ENCODE measurements at regions of chr1 and their contacts with region 1.

Region 1: GRCh38 chr1:84603941-84604830 is 29.9 kb upstream of the CTBS start:
- DNase-seq: peak; percentile 97
- ATAC-seq: peak; percentile 77
- H3K4me3 ChIP-seq: peak overlapping the region; percentile 63
- H3K27ac ChIP-seq: peak overlapping the region; percentile 92
- H3K4me1 ChIP-seq: peaks cover 27% of the 10 kb centered on the region
- H3K27me3 ChIP-seq: no peaks in the 10 kb centered on the region
- CTCF ChIP-seq: peak; percentile 88

Region 2: DNA sequence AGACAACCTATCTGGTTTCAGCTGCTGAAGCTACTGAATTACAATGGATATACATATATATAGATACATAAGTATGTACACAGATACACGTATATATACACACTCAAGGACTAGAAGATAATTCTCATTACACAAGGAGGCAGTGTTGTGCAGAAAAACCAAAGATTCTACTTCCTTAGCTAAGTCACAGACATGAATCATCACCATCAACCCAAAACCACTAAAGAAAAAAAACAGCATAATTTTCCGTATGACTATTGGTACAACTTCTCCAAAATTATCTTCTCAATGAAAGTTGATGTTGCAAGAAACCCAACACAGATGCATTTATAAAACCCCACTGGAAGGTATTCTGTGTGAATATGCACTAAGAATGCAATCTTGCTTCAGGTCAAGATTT is 161.9 kb before region 1 on chr1:
- CTCF ChIA-PET with region 1: interaction called, 11 read pairs
- POLR2A ChIA-PET with region 1: no interaction called
- intact Hi-C with region 1: loop called (anchors 1 kb)
- DNase-seq: peak; percentile 93
- ATAC-seq: peak; percentile 93
- H3K4me3 ChIP-seq: no peak overlapping the region
- H3K27ac ChIP-seq: peak overlapping the region; percentile 57
- H3K4me1 ChIP-seq: peaks cover 12% of the 10 kb centered on the region
- H3K27me3 ChIP-seq: no peaks in the 10 kb centered on the region
- CTCF ChIP-seq: peak; percentile 84

Region 3: GRCh38 chr1:84478876-84479868 is 125.0 kb before region 1 on chr1 and contains the start of gene RPF1:
- CTCF ChIA-PET with region 1: no interaction called
- POLR2A ChIA-PET with region 1: interaction called, 3 read pairs
- intact Hi-C with region 1: loop called (anchors 1 kb)
- DNase-seq: peak; percentile 79
- ATAC-seq: peak; percentile 96
- H3K4me3 ChIP-seq: peak within 1 kb of the TSS; percentile 84
- H3K27ac ChIP-seq: peak within 1 kb of the TSS; percentile 52
- H3K4me1 ChIP-seq: peaks cover 30% of the 10 kb centered on the region
- H3K27me3 ChIP-seq: no peaks in the 10 kb centered on the region
- CTCF ChIP-seq: no peak
- total RNA-seq, gene RPF1: 83.0 and 85.8 TPM in 2 replicates

Region 4: GRCh38 chr1:84541679-84542078 is 62.5 kb before region 1 on chr1:
- CTCF ChIA-PET with region 1: no interaction called
- POLR2A ChIA-PET with region 1: no interaction called
- intact Hi-C with region 1: loop called (anchors 2 kb)
- DNase-seq: peak; percentile 14
- ATAC-seq: no peak
- H3K4me3 ChIP-seq: no peak overlapping the region
- H3K27ac ChIP-seq: no peak overlapping the region
- H3K4me1 ChIP-seq: peaks cover 16% of the 10 kb centered on the region
- H3K27me3 ChIP-seq: no peaks in the 10 kb centered on the region
- CTCF ChIP-seq: peak; percentile 65

Region 5: GRCh38 chr1:84573967-84574842 is 30.0 kb before region 1 on chr1 and contains the start of gene CTBS:
- CTCF ChIA-PET with region 1: no interaction called
- POLR2A ChIA-PET with region 1: interaction called, 4 read pairs
- intact Hi-C with region 1: loop called (anchors 1 kb)
- DNase-seq: peak; percentile 80
- ATAC-seq: peak; percentile 88
- H3K4me3 ChIP-seq: peak within 1 kb of the TSS; percentile 94
- H3K27ac ChIP-seq: peak within 1 kb of the TSS; percentile 97
- H3K4me1 ChIP-seq: peaks cover 39% of the 10 kb centered on the region
- H3K27me3 ChIP-seq: no peaks in the 10 kb centered on the region
- CTCF ChIP-seq: no peak
- total RNA-seq, gene CTBS: 3.7 and 5.9 TPM in 2 replicates

Region 6: DNA sequence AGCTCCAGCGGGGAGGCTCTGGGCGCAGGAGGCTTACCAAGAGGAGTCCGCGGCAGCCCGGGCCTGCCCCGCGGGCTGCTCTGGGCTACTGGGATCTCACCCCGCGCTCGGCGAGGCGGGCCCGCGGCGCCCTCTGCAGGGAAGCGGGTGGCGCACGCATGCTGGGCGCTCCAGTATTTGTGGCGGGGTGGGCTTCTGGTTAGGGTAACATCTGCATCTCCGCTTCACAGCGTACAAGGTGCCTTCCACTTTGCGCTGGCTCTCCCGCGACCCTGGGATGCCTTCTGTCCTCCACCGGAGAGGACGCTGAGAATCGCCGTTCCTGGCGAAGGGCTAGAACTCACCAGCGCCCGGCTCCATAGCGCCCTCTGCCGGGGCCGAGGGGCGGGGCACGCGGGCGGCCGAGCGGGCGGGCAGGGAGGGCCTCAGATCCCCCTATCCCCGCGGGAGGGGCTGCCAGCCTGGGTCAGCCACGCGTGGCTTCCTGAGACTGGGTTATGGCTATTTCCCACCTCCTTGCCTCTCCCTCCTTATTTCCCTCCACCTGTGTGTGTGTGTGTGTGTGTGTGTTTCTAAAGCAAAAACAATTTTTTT is 16.6 kb after region 1 on chr1:
- CTCF ChIA-PET with region 1: no interaction called
- POLR2A ChIA-PET with region 1: no interaction called
- intact Hi-C with region 1: loop called (anchors 1 kb)
- DNase-seq: peak; percentile 84
- ATAC-seq: peak; percentile 83
- H3K4me3 ChIP-seq: peak overlapping the region; percentile 81
- H3K27ac ChIP-seq: peak overlapping the region; percentile 84
- H3K4me1 ChIP-seq: peaks cover 24% of the 10 kb centered on the region
- H3K27me3 ChIP-seq: no peaks in the 10 kb centered on the region
- CTCF ChIP-seq: peak; percentile 98

Measured in PC-3 (cell line).